Calu3 (cell line): ENCODE measurements at regions of chr2 and their contacts with region 1.

Region 1: GRCh38 chr2:160918906-160919503 is 241.2 kb upstream of the TANK start:
- DNase-seq: peak; percentile 80
- H3K4me3 Mint-ChIP-seq: no peak overlapping the region
- H3K27ac Mint-ChIP-seq: peak overlapping the region; percentile 64
- H3K4me1 Mint-ChIP-seq: no peaks in the 10 kb centered on the region
- H3K27me3 Mint-ChIP-seq: no peaks in the 10 kb centered on the region
- CTCF ChIP-seq: peak; percentile 77

Region 2: GRCh38 chr2:160324161-160324800 is 594.7 kb before region 1 on chr2:
- CTCF ChIA-PET with region 1: interaction called, 6 read pairs
- intact Hi-C with region 1: loop called (anchors 5 kb)
- DNase-seq: peak; percentile 58
- H3K4me3 Mint-ChIP-seq: no peak overlapping the region
- H3K27ac Mint-ChIP-seq: no peak overlapping the region
- H3K4me1 Mint-ChIP-seq: peaks cover 56% of the 10 kb centered on the region
- H3K27me3 Mint-ChIP-seq: no peaks in the 10 kb centered on the region
- CTCF ChIP-seq: peak; percentile 56

Region 3: GRCh38 chr2:160429248-160430000 is 489.6 kb before region 1 on chr2:
- CTCF ChIA-PET with region 1: interaction called, 6 read pairs
- intact Hi-C with region 1: loop called (anchors 1 kb)
- DNase-seq: no peak
- H3K4me3 Mint-ChIP-seq: no peak overlapping the region
- H3K27ac Mint-ChIP-seq: peak overlapping the region; percentile 26
- H3K4me1 Mint-ChIP-seq: peaks cover 33% of the 10 kb centered on the region
- H3K27me3 Mint-ChIP-seq: no peaks in the 10 kb centered on the region
- CTCF ChIP-seq: peak; percentile 39